ENCODE measurements at regions of chr15 and their contacts with region 1.

Region 1: GRCh38 chr15:66946578-66947164 is 118.7 kb upstream of the SMAD3 start:
- DNase-seq: peak; percentile 83 to 92
- ATAC-seq: peak; percentile 72 to 77
- H3K4me3 ChIP-seq: no peak overlapping the region
- H3K27ac ChIP-seq: peak overlapping the region; percentile 60 to 82
- H3K4me1 ChIP-seq: peaks cover 39% of the 10 kb centered on the region
- CTCF ChIP-seq: peak; percentile 98
- EP300 ChIP-seq: no peak
- POLR2A ChIP-seq: no peak
- RAD21 ChIP-seq: peak; percentile 99

Region 2: DNA sequence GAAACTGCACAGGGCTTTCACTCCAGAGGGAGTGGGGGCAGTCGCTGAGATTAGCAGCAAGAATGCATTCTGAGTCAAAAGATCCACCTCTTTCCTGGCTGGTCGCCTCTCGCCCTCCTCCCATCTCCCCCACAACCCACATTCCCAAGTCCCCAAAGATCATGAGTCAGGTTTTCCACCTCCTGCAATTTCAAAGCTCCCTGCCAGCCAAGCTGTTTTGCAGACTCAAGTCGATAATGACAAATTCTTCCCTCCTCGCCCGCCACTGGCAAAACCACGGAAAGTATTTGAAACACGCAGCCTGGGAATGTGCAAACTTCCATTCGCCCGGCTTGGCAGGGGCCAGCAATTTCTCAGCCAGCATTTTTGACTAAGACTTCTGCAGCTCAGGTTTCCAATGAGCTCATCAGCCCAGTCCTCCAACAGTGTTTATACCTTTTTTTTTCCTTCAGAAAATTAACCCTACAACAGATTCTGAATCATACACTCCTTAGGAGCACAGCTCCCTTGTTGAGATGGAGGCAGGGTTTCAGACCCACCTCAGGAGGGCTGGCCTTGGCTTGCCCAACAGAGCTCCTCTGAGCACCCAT is 63.3 kb before region 1 on chr15:
- CTCF ChIA-PET with region 1: interaction called, 15 read pairs
- POLR2A ChIA-PET with region 1: no interaction called
- DNase-seq: peak; percentile 96 to 99
- ATAC-seq: peak; percentile 87 to 91
- H3K4me3 ChIP-seq: no peak overlapping the region
- H3K27ac ChIP-seq: peak overlapping the region; percentile 75 to 89
- H3K4me1 ChIP-seq: peaks cover 55% of the 10 kb centered on the region
- CTCF ChIP-seq: no peak
- EP300 ChIP-seq: peak; percentile 83 to 95; a peak in 4 of 5 replicates
- POLR2A ChIP-seq: no peak
- RAD21 ChIP-seq: peak; percentile 34 to 61

Region 3: DNA sequence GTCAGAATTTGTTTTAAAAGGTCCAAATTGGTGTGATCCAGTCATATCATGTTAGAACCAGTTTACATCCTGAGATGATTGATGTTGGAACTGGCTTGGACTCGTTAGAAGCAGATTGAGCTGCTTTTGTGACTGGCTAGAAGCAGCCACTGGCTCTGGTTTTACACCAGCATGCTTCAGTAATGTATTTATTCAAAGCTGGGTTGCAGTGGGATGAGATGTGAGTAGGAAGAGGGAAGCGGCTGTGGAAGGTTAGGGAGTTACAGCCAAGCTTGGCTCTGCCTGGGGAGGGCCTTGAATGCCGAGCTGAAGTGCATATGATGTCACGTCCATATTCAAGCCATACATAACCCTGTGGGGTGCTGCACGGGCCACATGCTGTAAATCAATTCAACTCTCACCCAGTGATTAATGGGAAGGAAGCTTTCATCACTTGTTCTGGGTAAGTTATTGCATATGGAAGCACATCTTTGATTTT is 14.8 kb after region 1 on chr15:
- CTCF ChIA-PET with region 1: interaction called, 38 read pairs
- POLR2A ChIA-PET with region 1: no interaction called
- DNase-seq: no peak
- ATAC-seq: peak in 1 of 2 experiments; percentile 38; a peak in 2 of 6 replicates
- H3K4me3 ChIP-seq: no peak overlapping the region
- H3K27ac ChIP-seq: peak overlapping the region in 1 of 2 experiments; percentile 50; a peak in 3 of 6 replicates
- H3K4me1 ChIP-seq: peaks cover 4% of the 10 kb centered on the region
- CTCF ChIP-seq: no peak
- EP300 ChIP-seq: no peak
- POLR2A ChIP-seq: no peak
- RAD21 ChIP-seq: no peak

Region 4: GRCh38 chr15:67042551-67043142 is 96.0 kb after region 1 on chr15:
- CTCF ChIA-PET with region 1: interaction called, 21 read pairs
- POLR2A ChIA-PET with region 1: no interaction called
- DNase-seq: no peak
- ATAC-seq: peak; percentile 23 to 29; a peak in 4 of 6 replicates
- H3K4me3 ChIP-seq: no peak overlapping the region
- H3K27ac ChIP-seq: no peak overlapping the region
- H3K4me1 ChIP-seq: peaks cover 26% of the 10 kb centered on the region; the same call in 2 of the 3 replicates
- CTCF ChIP-seq: no peak
- EP300 ChIP-seq: no peak
- POLR2A ChIP-seq: no peak
- RAD21 ChIP-seq: no peak

Region 5: DNA sequence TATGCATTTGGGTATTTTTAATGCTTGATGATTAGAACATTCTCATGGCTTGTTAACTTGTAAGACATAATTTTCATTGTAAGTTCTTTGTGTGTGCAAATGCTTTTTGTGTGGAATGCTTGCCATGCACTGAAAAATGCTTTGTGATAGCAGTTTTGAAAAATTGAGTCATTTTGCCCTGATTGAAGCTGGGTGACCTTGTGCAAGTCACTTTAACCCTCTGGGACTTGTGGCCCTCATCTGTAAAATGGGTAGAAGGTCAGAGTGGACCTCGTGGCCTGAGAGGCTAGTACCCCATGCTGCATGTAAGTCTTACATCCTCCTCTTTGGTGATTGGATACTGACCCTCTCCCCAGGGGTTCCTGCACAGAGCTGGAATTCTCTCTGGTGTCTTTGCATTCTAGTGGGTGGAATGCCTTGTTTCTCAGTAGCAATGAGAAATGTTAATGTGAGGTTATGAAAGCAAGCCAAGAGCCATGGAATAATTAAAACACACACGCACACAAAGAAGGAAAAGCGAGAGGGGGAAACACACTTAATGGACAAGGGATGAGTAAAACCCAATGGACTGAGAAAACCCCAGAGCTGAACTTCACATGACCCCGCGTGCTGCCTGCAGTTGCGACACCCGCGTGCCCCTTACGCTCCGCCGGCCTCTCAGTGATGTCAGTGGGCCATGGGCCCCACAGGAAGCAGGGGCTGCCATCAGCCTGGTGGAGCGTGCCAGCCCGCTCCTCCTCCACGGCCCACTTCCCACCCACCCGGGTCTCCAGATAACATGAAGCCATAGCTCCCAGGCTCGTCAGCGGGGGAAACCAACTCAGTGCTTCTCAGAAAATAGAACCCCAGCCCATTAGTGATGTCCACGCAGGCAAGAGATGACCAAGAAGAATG is 162.7 kb after region 1 on chr15:
- CTCF ChIA-PET with region 1: interaction called, 19 read pairs
- POLR2A ChIA-PET with region 1: no interaction called
- DNase-seq: peak; percentile 88 to 98
- ATAC-seq: peak; percentile 35 to 48
- H3K4me3 ChIP-seq: no peak overlapping the region
- H3K27ac ChIP-seq: peak overlapping the region; percentile 92 to 93
- H3K4me1 ChIP-seq: peaks cover 79% of the 10 kb centered on the region
- CTCF ChIP-seq: no peak
- EP300 ChIP-seq: peak; percentile 97 to 100
- POLR2A ChIP-seq: no peak
- RAD21 ChIP-seq: peak; percentile 26 to 66; a peak in 4 of 5 replicates

Region 6: DNA sequence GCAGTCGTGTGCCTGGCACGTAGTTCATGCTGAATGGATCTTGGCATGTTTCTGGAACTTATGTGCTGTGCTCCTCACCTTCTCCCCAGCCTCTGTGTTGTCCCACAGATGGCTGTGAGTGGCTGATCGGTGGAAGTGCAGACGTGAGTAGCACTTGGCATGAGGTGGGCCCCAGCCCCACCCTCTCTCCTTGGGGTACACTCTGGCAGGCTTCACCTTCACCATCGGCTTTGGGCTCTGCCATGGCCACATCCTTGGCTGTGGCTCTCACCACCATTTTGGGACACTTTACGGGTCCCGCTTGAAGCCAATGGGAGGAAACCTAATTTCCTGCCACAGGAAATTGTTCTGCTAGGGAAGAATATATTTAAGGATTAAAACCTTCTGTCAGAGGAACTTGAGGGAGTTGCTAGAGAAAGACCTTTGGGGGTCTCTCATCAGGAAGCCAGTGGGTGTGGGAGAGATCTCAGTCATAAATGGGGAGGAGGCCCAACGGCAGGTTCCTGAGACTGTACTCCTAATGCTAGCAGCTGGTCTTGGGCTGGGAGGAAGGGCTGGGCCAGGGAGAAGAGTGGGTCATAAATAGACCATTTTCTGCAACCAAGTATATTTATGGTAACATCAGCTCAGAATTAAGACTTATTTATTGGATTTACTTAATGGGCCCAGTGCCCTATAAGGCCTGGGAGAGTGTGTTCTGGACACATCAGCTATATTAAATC is 211.0 kb after region 1 on chr15:
- CTCF ChIA-PET with region 1: interaction called, 18 read pairs
- POLR2A ChIA-PET with region 1: no interaction called
- DNase-seq: no peak
- ATAC-seq: peak in 1 of 2 experiments; percentile 10; a peak in 3 of 6 replicates
- H3K4me3 ChIP-seq: no peak overlapping the region
- H3K27ac ChIP-seq: peak overlapping the region in 1 of 2 experiments; percentile 71; a peak in 3 of 6 replicates
- H3K4me1 ChIP-seq: peaks cover 82% of the 10 kb centered on the region
- CTCF ChIP-seq: no peak
- EP300 ChIP-seq: no peak
- POLR2A ChIP-seq: no peak
- RAD21 ChIP-seq: no peak

Region 7: GRCh38 chr15:67296188-67296587 is 349.5 kb after region 1 on chr15:
- CTCF ChIA-PET with region 1: interaction called, 76 read pairs
- POLR2A ChIA-PET with region 1: no interaction called
- DNase-seq: no peak
- ATAC-seq: no peak
- H3K4me3 ChIP-seq: no peak overlapping the region
- H3K27ac ChIP-seq: no peak overlapping the region
- H3K4me1 ChIP-seq: no peaks in the 10 kb centered on the region
- CTCF ChIP-seq: no peak
- EP300 ChIP-seq: no peak
- POLR2A ChIP-seq: no peak
- RAD21 ChIP-seq: no peak